ENCODE measurements at regions of chr4 and their contacts with region 1.

Region 1: DNA sequence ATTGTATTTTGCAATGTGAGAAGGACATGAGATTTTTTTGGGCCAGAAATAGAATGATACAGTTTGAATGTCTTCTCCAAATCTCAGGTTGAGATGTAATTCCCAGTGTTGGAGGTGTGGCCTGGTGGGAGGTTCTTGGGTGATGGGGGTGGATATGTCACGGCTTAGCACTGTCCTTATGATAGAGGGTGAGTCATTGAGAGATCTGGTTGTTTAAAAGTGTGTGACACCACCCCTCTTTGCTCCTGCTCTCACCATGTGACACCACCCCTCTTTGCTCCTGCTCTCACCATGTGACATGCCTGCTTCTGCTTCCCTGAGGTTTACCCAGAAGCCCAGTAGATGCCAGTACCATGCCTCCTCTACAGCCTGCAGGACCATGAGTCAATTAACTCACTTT is 1226.9 kb downstream of the PCDH7 start:
- DNase-seq: no peak
- H3K4me3 ChIP-seq: no peak overlapping the region
- H3K27ac ChIP-seq: no peak overlapping the region
- H3K4me1 ChIP-seq: no peaks in the 10 kb centered on the region
- H3K27me3 ChIP-seq: no peaks in the 10 kb centered on the region
- CTCF ChIP-seq: no peak
- EP300 ChIP-seq: no peak
- POLR2A ChIP-seq: no peak

Region 2: GRCh38 chr4:31016322-31017061 is 930.6 kb before region 1 on chr4:
- in situ Hi-C with region 1: no loop called
- intact Hi-C with region 1: no loop called
- DNase-seq: no peak
- H3K4me3 ChIP-seq: no peak overlapping the region
- H3K27ac ChIP-seq: no peak overlapping the region
- H3K4me1 ChIP-seq: no peaks in the 10 kb centered on the region
- H3K27me3 ChIP-seq: no peaks in the 10 kb centered on the region
- CTCF ChIP-seq: no peak
- EP300 ChIP-seq: no peak
- POLR2A ChIP-seq: no peak

Region 3: DNA sequence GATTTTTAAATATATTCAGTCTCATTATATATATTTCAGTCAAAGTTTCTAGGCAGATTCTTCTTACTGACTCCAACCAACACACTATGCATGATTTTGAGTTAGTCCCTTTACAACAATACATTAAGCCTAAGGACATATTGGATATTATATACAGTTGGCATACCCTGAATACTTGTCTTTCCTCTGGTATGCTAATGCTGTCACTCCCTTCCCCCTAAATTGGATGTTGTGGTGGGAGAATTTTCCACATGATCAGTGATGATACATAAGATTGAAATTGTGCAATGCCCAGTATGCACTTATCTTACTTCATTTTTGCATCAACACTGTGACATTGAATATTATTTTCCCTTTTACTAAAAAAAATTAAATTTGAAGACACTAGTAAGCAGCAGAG is 291.8 kb before region 1 on chr4:
- in situ Hi-C with region 1: no loop called
- intact Hi-C with region 1: loop called (anchors 5 kb)
- DNase-seq: no peak
- H3K4me3 ChIP-seq: no peak overlapping the region
- H3K27ac ChIP-seq: no peak overlapping the region
- H3K4me1 ChIP-seq: no peaks in the 10 kb centered on the region
- H3K27me3 ChIP-seq: no peaks in the 10 kb centered on the region
- CTCF ChIP-seq: no peak
- EP300 ChIP-seq: no peak
- POLR2A ChIP-seq: no peak

Measured in transverse colon (tissue), 4 donors.